AG04450 (cell line): ENCODE measurements at regions of chr5 and their contacts with region 1.

Region 1: GRCh38 chr5:177403792-177404640 is 3.6 kb upstream of the PFN3 start:
- DNase-seq: peak; percentile 49
- H3K4me3 ChIP-seq: peak overlapping the region; percentile 69
- H3K27ac ChIP-seq: no peak overlapping the region
- H3K27me3 ChIP-seq: peaks cover 50% of the 10 kb centered on the region
- CTCF ChIP-seq: peak; percentile 76

Region 2: GRCh38 chr5:177317959-177318377 is 86.0 kb before region 1 on chr5:
- CTCF ChIA-PET with region 1: interaction called, 20 read pairs
- POLR2A ChIA-PET with region 1: no interaction called
- DNase-seq: peak; percentile 63
- H3K4me3 ChIP-seq: no peak overlapping the region
- H3K27ac ChIP-seq: no peak overlapping the region
- H3K27me3 ChIP-seq: no peaks in the 10 kb centered on the region
- CTCF ChIP-seq: peak; percentile 93

Region 3: GRCh38 chr5:177378884-177379883 is 24.8 kb before region 1 on chr5:
- CTCF ChIA-PET with region 1: interaction called, 13 read pairs
- POLR2A ChIA-PET with region 1: no interaction called
- DNase-seq: peak; percentile 82
- H3K4me3 ChIP-seq: no peak overlapping the region
- H3K27ac ChIP-seq: peak overlapping the region; percentile 81
- H3K27me3 ChIP-seq: peaks cover 12% of the 10 kb centered on the region
- CTCF ChIP-seq: no peak

Region 4: GRCh38 chr5:177419051-177419450 is 15.0 kb after region 1 on chr5:
- CTCF ChIA-PET with region 1: interaction called, 34 read pairs
- POLR2A ChIA-PET with region 1: no interaction called
- DNase-seq: peak; percentile 74
- H3K4me3 ChIP-seq: no peak overlapping the region
- H3K27ac ChIP-seq: no peak overlapping the region
- H3K27me3 ChIP-seq: no peaks in the 10 kb centered on the region
- CTCF ChIP-seq: no peak

Region 5: GRCh38 chr5:177446200-177447065 is 42.4 kb after region 1 on chr5 and contains the start of gene PRR7:
- CTCF ChIA-PET with region 1: interaction called, 90 read pairs
- POLR2A ChIA-PET with region 1: interaction called, 7 read pairs
- DNase-seq: no peak
- H3K4me3 ChIP-seq: peak within 1 kb of the TSS; percentile 73
- H3K27ac ChIP-seq: peak within 1 kb of the TSS; percentile 39
- H3K27me3 ChIP-seq: no peaks in the 10 kb centered on the region
- CTCF ChIP-seq: no peak
- polyA plus RNA-seq, gene PRR7: 1.0 and 1.6 TPM in 2 replicates

Region 6: GRCh38 chr5:177473461-177474001 is 69.5 kb after region 1 on chr5 and contains the start of gene DBN1:
- CTCF ChIA-PET with region 1: interaction called, 11 read pairs
- POLR2A ChIA-PET with region 1: no interaction called
- DNase-seq: no peak
- H3K4me3 ChIP-seq: peak within 1 kb of the TSS; percentile 92
- H3K27ac ChIP-seq: peak within 1 kb of the TSS; percentile 68
- H3K27me3 ChIP-seq: no peaks in the 10 kb centered on the region
- CTCF ChIP-seq: no peak
- polyA plus RNA-seq, gene DBN1: 146 and 164 TPM in 2 replicates